GM12878 (cell line): ENCODE measurements at regions of chr1 and their contacts with region 1.

Region 1: GRCh38 chr1:8423650-8424538 is 106.0 kb downstream of the SLC45A1 start:
- DNase-seq: no peak
- ATAC-seq: peak; percentile 54
- H3K4me3 ChIP-seq: peak overlapping the region; percentile 79
- H3K27ac ChIP-seq: peak overlapping the region; percentile 79
- H3K4me1 ChIP-seq: peaks cover 39% of the 10 kb centered on the region
- H3K27me3 ChIP-seq: no peaks in the 10 kb centered on the region
- CTCF ChIP-seq: no peak
- EP300 ChIP-seq: 0 out of 4 replicates have a peak, but pooled peaks of 1 of the 2 experiments have one; percentile 40
- POLR2A ChIP-seq: peak; percentile 63
- RAD21 ChIP-seq: 0 out of 2 replicates have a peak, but pooled peaks have one; percentile 7

Region 2: GRCh38 chr1:8396786-8397406 is 27.0 kb before region 1 on chr1:
- CTCF ChIA-PET with region 1: interaction called, 7 read pairs
- POLR2A ChIA-PET with region 1: interaction called, 5 read pairs
- RAD21 ChIA-PET with region 1: interaction called, 7 read pairs
- SMC1A ChIA-PET with region 1: interaction called, 29 read pairs
- in situ Hi-C with region 1: no loop called
- intact Hi-C with region 1: loop called (anchors 2 kb)
- DNase-seq: peak; percentile 49
- ATAC-seq: peak; percentile 77
- H3K4me3 ChIP-seq: peak overlapping the region; percentile 7; the same call in 1 of the 2 replicates
- H3K27ac ChIP-seq: peak overlapping the region; percentile 87
- H3K4me1 ChIP-seq: peaks cover 48% of the 10 kb centered on the region
- H3K27me3 ChIP-seq: no peaks in the 10 kb centered on the region
- CTCF ChIP-seq: no peak
- EP300 ChIP-seq: no peak
- POLR2A ChIP-seq: no peak
- RAD21 ChIP-seq: no peak

Region 3: GRCh38 chr1:8409106-8409505 is 14.8 kb before region 1 on chr1:
- CTCF ChIA-PET with region 1: interaction called, 14 read pairs
- POLR2A ChIA-PET with region 1: interaction called, 14 read pairs
- RAD21 ChIA-PET with region 1: interaction called, 6 read pairs
- SMC1A ChIA-PET with region 1: interaction called, 19 read pairs
- in situ Hi-C with region 1: no loop called
- intact Hi-C with region 1: no loop called
- DNase-seq: no peak
- ATAC-seq: peak; percentile 66
- H3K4me3 ChIP-seq: no peak overlapping the region
- H3K27ac ChIP-seq: no peak overlapping the region
- H3K4me1 ChIP-seq: no peaks in the 10 kb centered on the region
- H3K27me3 ChIP-seq: no peaks in the 10 kb centered on the region
- CTCF ChIP-seq: peak in 1 of 3 experiments; percentile 52; a peak in 3 of 6 replicates
- EP300 ChIP-seq: no peak
- POLR2A ChIP-seq: no peak
- RAD21 ChIP-seq: peak; percentile 31

Region 4: DNA sequence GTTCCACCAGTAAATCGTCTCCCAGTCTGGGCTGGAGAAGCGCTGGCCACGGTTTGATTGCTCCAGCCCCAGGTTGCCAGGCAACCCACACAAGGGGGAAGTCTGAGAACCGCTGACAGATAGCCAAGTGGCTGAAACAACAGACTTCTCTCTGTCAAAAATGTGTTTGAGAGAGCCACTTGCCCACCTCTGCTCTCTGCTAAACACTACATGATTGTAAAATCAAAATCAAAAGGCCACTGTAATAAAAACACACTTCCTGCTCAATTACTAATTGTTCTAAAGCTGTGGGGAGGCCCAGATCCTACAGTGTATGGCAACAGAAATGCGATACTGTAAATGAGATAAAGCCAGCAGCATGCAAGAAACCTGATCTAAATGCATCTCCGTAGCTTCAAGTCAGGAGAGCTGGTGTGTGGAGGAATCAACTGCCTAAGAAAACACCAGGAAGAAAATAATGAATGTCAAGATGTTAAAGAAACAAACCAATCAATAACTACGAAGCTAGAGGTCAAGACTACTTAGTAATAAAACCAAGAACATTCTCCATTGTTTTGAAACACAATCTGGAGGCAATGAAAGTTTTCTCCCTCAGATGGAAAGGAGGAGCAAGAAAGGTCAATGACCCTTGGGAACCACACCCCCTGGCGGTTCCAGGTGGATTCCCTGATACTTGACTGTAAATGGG is 15.3 kb after region 1 on chr1:
- CTCF ChIA-PET with region 1: interaction called, 14 read pairs
- POLR2A ChIA-PET with region 1: no interaction called
- RAD21 ChIA-PET with region 1: interaction called, 5 read pairs
- SMC1A ChIA-PET with region 1: interaction called, 21 read pairs
- in situ Hi-C with region 1: no loop called
- intact Hi-C with region 1: no loop called
- DNase-seq: no peak
- ATAC-seq: peak; percentile 95
- H3K4me3 ChIP-seq: no peak overlapping the region
- H3K27ac ChIP-seq: no peak overlapping the region
- H3K4me1 ChIP-seq: peaks cover 7% of the 10 kb centered on the region
- H3K27me3 ChIP-seq: no peaks in the 10 kb centered on the region
- CTCF ChIP-seq: no peak
- EP300 ChIP-seq: no peak
- POLR2A ChIP-seq: no peak
- RAD21 ChIP-seq: no peak

Region 5: DNA sequence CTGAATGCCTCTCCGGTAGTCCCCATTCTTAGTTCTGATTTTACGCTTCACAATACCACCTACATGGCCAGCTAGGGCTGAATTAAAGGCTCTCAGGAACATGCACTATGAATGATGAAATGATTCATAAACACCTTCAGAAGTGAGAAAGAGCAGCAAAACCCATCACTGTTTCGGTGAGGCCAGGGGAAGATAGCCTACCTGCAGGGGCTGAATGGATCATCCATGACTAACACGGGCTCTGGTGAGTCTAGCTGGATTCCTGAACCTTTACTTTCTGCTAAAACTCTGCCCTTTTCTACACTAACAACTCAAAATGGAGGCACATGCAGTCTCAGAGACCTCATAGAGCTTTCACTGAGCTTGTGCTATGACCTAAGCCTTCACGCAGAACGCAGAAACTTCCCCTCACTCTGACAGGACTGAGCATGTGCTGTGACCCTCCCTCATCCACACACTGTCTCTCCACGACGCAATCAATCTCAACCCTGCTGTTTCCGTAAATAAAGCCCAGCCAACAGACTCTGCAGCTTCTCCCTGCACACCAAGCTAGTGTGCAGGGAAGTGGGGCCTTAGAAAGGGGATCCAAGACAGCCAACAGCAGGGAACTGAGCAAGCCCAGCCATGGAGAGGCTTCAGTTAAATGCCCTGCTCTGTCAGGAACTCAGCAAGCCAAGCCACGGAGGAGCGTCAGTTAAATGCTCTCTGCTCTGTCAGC is 101.8 kb after region 1 on chr1:
- CTCF ChIA-PET with region 1: interaction called, 5 read pairs
- POLR2A ChIA-PET with region 1: interaction called, 7 read pairs
- RAD21 ChIA-PET with region 1: interaction called, 8 read pairs
- SMC1A ChIA-PET with region 1: interaction called, 4 read pairs
- in situ Hi-C with region 1: no loop called
- intact Hi-C with region 1: loop called (anchors 10 kb)
- DNase-seq: peak; percentile 66
- ATAC-seq: peak; percentile 85
- H3K4me3 ChIP-seq: peak overlapping the region; percentile 67
- H3K27ac ChIP-seq: peak overlapping the region; percentile 67
- H3K4me1 ChIP-seq: peaks cover 23% of the 10 kb centered on the region
- H3K27me3 ChIP-seq: no peaks in the 10 kb centered on the region
- CTCF ChIP-seq: no peak
- EP300 ChIP-seq: no peak
- POLR2A ChIP-seq: no peak; the same call in 1 of the 2 replicates
- RAD21 ChIP-seq: no peak

Region 6: GRCh38 chr1:8962812-8963530 is 539.1 kb after region 1 on chr1:
- CTCF ChIA-PET with region 1: no interaction called
- POLR2A ChIA-PET with region 1: no interaction called
- RAD21 ChIA-PET with region 1: no interaction called
- SMC1A ChIA-PET with region 1: no interaction called
- in situ Hi-C with region 1: no loop called
- intact Hi-C with region 1: no loop called
- DNase-seq: no peak
- ATAC-seq: peak; percentile 90
- H3K4me3 ChIP-seq: no peak overlapping the region
- H3K27ac ChIP-seq: no peak overlapping the region
- H3K4me1 ChIP-seq: no peaks in the 10 kb centered on the region; the same call in 1 of the 2 replicates
- H3K27me3 ChIP-seq: no peaks in the 10 kb centered on the region; a peak in 1 of 4 replicates
- CTCF ChIP-seq: peak; percentile 59 to 79 (median 66)
- EP300 ChIP-seq: no peak
- POLR2A ChIP-seq: no peak
- RAD21 ChIP-seq: peak; percentile 44

Region 7: DNA sequence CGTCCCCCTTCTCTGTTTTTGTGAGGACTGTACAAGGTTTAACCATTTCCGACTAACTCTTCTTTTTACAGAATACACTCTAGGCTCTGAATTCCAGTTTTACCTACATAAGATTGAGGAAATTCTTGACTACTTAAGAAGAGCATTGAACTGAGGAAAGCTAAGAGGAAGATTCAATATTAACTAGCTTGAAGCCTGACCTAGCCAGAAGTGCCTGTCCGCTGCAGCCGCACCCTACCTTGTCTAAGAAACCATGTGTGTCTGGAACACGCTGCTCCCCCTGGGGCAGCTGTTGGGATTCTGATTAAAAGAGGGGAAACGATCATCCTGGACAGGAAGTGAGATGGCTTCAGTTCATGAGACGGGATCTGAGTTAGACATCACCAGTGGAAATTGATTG is 550.7 kb after region 1 on chr1:
- CTCF ChIA-PET with region 1: no interaction called
- POLR2A ChIA-PET with region 1: no interaction called
- RAD21 ChIA-PET with region 1: no interaction called
- SMC1A ChIA-PET with region 1: no interaction called
- in situ Hi-C with region 1: no loop called
- intact Hi-C with region 1: no loop called
- DNase-seq: no peak
- ATAC-seq: no peak
- H3K4me3 ChIP-seq: no peak overlapping the region
- H3K27ac ChIP-seq: no peak overlapping the region
- H3K4me1 ChIP-seq: peaks cover 3% of the 10 kb centered on the region
- H3K27me3 ChIP-seq: peaks cover 0 to under 1% of the 10 kb centered on the region in 2 experiments; a peak in 2 of 4 replicates
- CTCF ChIP-seq: no peak
- EP300 ChIP-seq: no peak
- POLR2A ChIP-seq: no peak
- RAD21 ChIP-seq: no peak